ENCODE measurements at regions of chr4 and their contacts with region 1.

Region 1: DNA sequence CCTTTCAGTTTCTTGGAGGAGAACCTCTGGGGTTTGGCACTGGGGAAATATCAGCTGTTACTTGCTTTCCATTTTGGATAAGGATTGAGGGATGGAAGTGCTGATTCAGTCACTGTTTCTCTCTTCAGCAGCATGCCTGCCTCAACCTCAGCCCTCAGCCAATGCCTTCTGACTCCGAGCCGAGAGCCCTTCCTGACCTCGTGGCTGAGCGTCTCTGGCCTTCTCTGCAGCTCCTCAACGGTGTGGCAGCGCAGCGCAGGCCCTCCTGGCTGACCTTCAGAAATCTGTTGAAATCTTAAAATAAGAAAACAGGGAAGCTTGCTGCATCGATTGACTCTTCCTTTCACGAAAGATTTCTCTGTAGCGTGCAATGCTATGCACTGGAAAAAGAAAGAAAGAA is 434.3 kb upstream of the FAT1 start:
- DNase-seq: no peak
- H3K4me3 ChIP-seq: no peak overlapping the region
- H3K27ac ChIP-seq: no peak overlapping the region
- H3K4me1 ChIP-seq: no peaks in the 10 kb centered on the region
- H3K27me3 ChIP-seq: no peaks in the 10 kb centered on the region
- CTCF ChIP-seq: no peak
- POLR2A ChIP-seq: no peak

Region 2: GRCh38 chr4:186859420-186859819 is 298.6 kb before region 1 on chr4:
- intact Hi-C with region 1: no loop called
- DNase-seq: no peak
- H3K4me3 ChIP-seq: no peak overlapping the region
- H3K27ac ChIP-seq: no peak overlapping the region
- H3K4me1 ChIP-seq: no peaks in the 10 kb centered on the region
- H3K27me3 ChIP-seq: no peaks in the 10 kb centered on the region
- CTCF ChIP-seq: no peak
- POLR2A ChIP-seq: no peak

Region 3: GRCh38 chr4:187972135-187972534 is 814.1 kb after region 1 on chr4:
- intact Hi-C with region 1: loop called (anchors 5 kb)
- DNase-seq: no peak
- H3K4me3 ChIP-seq: no peak overlapping the region
- H3K27ac ChIP-seq: no peak overlapping the region
- H3K4me1 ChIP-seq: no peaks in the 10 kb centered on the region
- H3K27me3 ChIP-seq: no peaks in the 10 kb centered on the region
- CTCF ChIP-seq: no peak
- POLR2A ChIP-seq: no peak